Posterior vena cava (tissue), 2 donors: ENCODE measurements at regions of chr10 and their contacts with region 1.

Region 1: DNA sequence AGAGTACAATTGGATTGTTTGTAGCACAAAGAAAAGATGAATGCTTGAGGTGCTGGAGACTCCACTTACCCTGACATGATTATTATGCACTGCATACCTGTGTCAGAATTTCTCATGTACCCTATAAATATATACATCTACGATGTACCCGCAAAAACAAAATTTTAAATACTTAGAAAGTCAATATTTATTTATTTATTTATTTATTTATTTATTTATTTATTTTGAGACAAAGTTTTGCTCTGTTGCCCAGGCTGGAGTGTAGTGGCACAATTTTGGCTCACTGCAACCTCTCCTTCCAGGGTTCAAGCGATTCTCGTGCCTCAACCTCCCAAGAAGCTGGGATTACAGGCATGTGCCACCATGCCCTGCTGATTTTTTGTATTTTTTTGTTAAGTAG is 35.1 kb upstream of the EBF3 start:
- DNase-seq: no peak

Region 2: GRCh38 chr10:130036296-130037065 is 37.3 kb after region 1 on chr10:
- intact Hi-C with region 1: loop called in 1 of 2 experiments (anchors 2 kb)
- DNase-seq: peak; percentile 62